OCI-LY7 (cell line): ENCODE measurements at regions of chrX and their contacts with region 1.

Region 1: GRCh38 chrX:41923257-41923969 is at the start of gene CASK:
- DNase-seq: peak; percentile 90
- H3K4me3 ChIP-seq: peak within 1 kb of the TSS; percentile 84
- H3K27ac ChIP-seq: peak within 1 kb of the TSS; percentile 57
- H3K4me1 ChIP-seq: peaks cover 19% of the 10 kb centered on the region
- CTCF ChIP-seq: no peak
- total RNA-seq, gene CASK: 18.6 and 27.9 TPM in 2 replicates

Region 2: GRCh38 chrX:41796577-41796976 is 126.8 kb before region 1 on chrX:
- CTCF ChIA-PET with region 1: no interaction called
- POLR2A ChIA-PET with region 1: no interaction called
- intact Hi-C with region 1: loop called (anchors 5 kb)
- DNase-seq: no peak
- H3K4me3 ChIP-seq: no peak overlapping the region
- H3K27ac ChIP-seq: no peak overlapping the region
- H3K4me1 ChIP-seq: peaks cover 10% of the 10 kb centered on the region
- CTCF ChIP-seq: no peak